ENCODE measurements at regions of chr18 and their contacts with region 1.

Region 1: DNA sequence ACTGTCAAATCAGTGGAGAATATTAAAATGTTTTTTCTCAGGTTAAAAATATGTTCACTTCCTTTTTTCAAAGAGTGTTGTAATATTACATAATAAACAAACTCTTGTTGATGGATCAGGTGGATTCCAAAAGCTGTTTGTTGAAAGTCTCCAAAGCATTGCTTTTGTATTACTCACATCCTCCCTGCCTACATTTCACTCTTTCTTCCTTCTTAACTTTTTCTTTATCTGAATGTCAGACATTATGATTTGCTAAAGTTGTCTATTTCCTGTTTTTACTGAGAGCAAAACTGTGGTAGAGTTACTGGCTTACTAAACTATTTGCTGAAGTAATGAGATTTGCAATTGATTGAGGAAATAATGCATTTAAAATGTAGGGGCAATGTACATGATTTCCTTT is 92.1 kb downstream of the CDH19 start:
- DNase-seq: no peak
- H3K4me3 ChIP-seq: no peak overlapping the region
- H3K27ac ChIP-seq: no peak overlapping the region
- H3K4me1 ChIP-seq: no peaks in the 10 kb centered on the region
- H3K27me3 ChIP-seq: no peaks in the 10 kb centered on the region
- CTCF ChIP-seq: no peak
- POLR2A ChIP-seq: no peak

Region 2: GRCh38 chr18:66587430-66587829 is 75.6 kb after region 1 on chr18:
- intact Hi-C with region 1: loop called (anchors 5 kb)
- DNase-seq: no peak
- H3K4me3 ChIP-seq: no peak overlapping the region
- H3K27ac ChIP-seq: no peak overlapping the region
- H3K4me1 ChIP-seq: no peaks in the 10 kb centered on the region
- H3K27me3 ChIP-seq: no peaks in the 10 kb centered on the region
- CTCF ChIP-seq: no peak
- POLR2A ChIP-seq: no peak

Measured in breast epithelium (tissue), 4 donors.